HAP-1 (cell line): ENCODE measurements at regions of chr3 and their contacts with region 1.

Region 1: GRCh38 chr3:32138545-32139104 is 32.2 kb downstream of the GPD1L start:
- DNase-seq: no peak
- H3K4me3 ChIP-seq: no peak overlapping the region
- H3K4me1 ChIP-seq: no peaks in the 10 kb centered on the region
- H3K27me3 ChIP-seq: no peaks in the 10 kb centered on the region

Region 2: DNA sequence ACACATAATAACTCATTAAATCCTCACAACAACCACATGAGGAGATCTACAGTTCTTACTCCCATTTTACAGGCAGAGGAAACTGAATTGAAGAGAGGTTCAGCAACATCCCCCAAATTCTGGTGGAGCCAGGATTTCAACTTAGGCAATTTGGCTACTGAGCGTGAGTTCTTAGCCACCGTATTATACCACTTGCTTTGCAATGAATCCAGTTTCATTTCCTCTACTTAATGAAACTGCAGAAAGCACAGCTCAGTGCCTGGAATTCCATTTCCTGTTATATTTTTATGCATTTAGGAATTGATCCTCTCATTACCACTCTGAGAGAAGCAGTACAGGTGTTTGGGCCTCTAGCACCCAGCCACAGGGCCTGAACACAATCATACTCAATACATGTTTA is 152.8 kb before region 1 on chr3:
- in situ Hi-C with region 1: no loop called
- DNase-seq: no peak
- H3K4me3 ChIP-seq: no peak overlapping the region
- H3K4me1 ChIP-seq: peaks cover 9% of the 10 kb centered on the region; the same call in 1 of the 2 replicates
- H3K27me3 ChIP-seq: no peaks in the 10 kb centered on the region

Region 3: GRCh38 chr3:32026593-32026992 is 112.0 kb before region 1 on chr3:
- in situ Hi-C with region 1: loop called (anchors 10 kb)
- DNase-seq: no peak
- H3K4me3 ChIP-seq: no peak overlapping the region
- H3K4me1 ChIP-seq: no peaks in the 10 kb centered on the region
- H3K27me3 ChIP-seq: no peaks in the 10 kb centered on the region

Region 4: DNA sequence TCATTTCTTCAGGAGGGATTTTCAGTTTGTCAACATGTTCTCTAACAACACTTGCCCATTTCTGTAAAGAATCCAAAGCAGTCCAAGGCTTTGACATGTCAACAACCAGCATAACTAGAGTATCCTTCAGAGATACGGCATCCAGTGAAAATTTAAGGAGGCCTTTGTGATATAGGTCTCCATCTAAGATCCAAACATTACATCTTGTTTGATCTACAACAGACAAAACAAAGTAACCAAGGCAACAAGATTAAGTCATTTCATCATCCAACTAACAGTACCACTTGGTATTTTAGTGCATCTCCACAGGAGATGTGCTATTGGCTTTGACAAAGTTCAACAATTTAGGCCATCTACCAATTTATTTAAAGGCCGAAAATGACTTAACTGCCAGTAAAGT is 406.3 kb after region 1 on chr3:
- in situ Hi-C with region 1: no loop called
- DNase-seq: no peak
- H3K4me3 ChIP-seq: no peak overlapping the region
- H3K4me1 ChIP-seq: peaks cover 18% of the 10 kb centered on the region
- H3K27me3 ChIP-seq: no peaks in the 10 kb centered on the region

Region 5: DNA sequence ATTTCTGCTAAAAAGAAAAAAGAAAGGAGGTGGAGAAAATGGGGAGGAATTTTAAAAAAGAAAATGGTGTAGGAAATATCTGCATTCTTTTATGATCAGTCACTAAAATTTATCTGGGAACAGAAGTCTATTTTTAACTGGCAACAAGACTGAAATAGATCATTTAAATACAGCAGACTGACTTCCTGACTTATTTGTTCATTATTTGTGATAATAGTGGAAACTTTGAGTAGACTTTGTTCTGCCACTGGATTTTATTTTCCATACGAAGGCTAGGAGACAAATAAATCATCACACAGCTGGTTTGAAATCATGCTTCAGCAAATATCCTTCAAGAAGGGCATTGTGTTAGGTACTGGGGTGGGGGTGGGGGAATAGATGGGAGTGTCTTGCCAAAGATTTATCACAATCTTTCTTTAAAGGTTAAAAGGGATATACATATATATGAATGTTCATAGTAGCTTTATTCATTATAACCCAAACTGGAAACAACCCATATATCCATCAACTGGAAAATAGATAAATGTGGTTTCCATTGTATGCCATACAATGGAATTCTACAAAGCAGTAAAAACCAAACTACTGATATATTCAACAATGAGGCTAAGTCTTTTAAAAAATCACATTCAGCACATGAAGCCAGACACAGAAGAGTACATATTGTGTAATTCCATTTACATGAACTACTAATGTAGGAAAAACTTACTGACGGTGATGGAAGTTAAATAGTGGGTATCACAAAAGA is 1584.2 kb after region 1 on chr3:
- in situ Hi-C with region 1: no loop called
- DNase-seq: peak; percentile 14 to 72
- H3K4me3 ChIP-seq: no peak overlapping the region
- H3K4me1 ChIP-seq: peaks cover 22% of the 10 kb centered on the region
- H3K27me3 ChIP-seq: no peaks in the 10 kb centered on the region